A673 (cell line): ENCODE measurements at regions of chr10 and their contacts with region 1.

Region 1: DNA sequence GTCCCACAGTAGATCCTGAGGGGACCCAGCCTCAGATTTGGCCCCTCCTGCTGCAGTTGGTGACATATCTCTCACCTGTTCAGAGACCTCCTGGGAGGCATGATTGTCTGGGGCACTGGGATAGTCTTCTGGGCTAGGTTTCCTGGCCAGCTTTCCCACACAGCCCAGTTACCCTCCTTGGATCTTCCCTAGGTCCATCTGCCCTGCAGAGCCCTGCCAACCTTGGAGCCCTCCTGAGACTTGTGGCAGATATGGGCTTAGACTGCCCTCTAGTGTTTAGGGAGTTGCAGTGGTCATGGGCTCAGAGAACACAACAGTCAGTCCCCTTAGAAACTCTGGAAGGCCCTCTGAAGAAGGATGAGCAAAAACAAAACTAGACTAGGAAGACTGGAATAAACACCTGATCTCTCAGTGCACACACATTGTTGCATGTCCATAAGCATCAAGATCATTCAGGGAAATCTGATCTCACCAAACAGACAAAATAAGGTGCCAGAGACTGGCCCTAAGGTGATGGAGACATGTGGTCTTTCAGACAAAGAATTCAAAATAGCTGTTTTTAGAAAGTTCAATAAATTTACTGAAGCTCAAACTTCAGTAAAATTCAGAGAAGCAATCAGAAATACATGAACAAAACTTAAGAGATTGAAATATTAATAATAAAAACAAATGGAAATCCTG is 324.6 kb downstream of the ATRNL1 start:
- DNase-seq: peak; percentile 74
- H3K4me3 ChIP-seq: no peak overlapping the region
- H3K27ac ChIP-seq: no peak overlapping the region
- H3K4me1 ChIP-seq: no peaks in the 10 kb centered on the region
- H3K27me3 ChIP-seq: no peaks in the 10 kb centered on the region
- CTCF ChIP-seq: peak; percentile 73

Region 2: DNA sequence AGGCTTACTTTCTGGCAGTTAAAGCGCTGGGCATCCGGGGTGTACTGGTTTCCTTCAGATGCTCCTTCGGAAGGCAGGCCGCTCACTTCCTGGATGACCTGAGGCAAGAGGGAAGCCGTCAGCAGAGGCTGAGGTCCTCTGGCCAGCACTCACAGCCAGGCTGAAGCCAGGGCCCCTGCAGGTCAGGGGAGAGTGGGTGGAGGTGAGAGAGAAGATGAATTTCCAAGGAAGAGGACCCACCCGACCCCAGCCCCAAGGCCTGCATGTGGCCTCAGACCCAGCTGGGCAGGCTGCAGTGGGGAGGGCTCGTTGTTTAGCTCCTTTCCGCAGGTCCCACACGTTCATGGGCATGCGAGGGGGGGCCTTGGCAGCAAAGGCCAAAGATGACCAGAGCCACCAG is 1107.4 kb before region 1 on chr10:
- CTCF ChIA-PET with region 1: no interaction called
- POLR2A ChIA-PET with region 1: no interaction called
- intact Hi-C with region 1: loop called (anchors 5 kb)
- DNase-seq: no peak
- H3K4me3 ChIP-seq: no peak overlapping the region
- H3K27ac ChIP-seq: no peak overlapping the region
- H3K4me1 ChIP-seq: no peaks in the 10 kb centered on the region
- H3K27me3 ChIP-seq: no peaks in the 10 kb centered on the region
- CTCF ChIP-seq: no peak

Region 3: GRCh38 chr10:114876602-114877300 is 541.0 kb before region 1 on chr10:
- CTCF ChIA-PET with region 1: no interaction called
- POLR2A ChIA-PET with region 1: no interaction called
- intact Hi-C with region 1: loop called (anchors 10 kb)
- DNase-seq: peak; percentile 80
- H3K4me3 ChIP-seq: no peak overlapping the region
- H3K27ac ChIP-seq: no peak overlapping the region
- H3K4me1 ChIP-seq: peaks cover 29% of the 10 kb centered on the region
- H3K27me3 ChIP-seq: no peaks in the 10 kb centered on the region
- CTCF ChIP-seq: peak; percentile 86

Region 4: GRCh38 chr10:115141254-115141653 is 276.5 kb before region 1 on chr10:
- CTCF ChIA-PET with region 1: no interaction called
- POLR2A ChIA-PET with region 1: no interaction called
- intact Hi-C with region 1: loop called (anchors 1 kb)
- DNase-seq: peak; percentile 33
- H3K4me3 ChIP-seq: no peak overlapping the region
- H3K27ac ChIP-seq: no peak overlapping the region
- H3K4me1 ChIP-seq: no peaks in the 10 kb centered on the region
- H3K27me3 ChIP-seq: peaks cover 19% of the 10 kb centered on the region
- CTCF ChIP-seq: peak; percentile 60

Region 5: DNA sequence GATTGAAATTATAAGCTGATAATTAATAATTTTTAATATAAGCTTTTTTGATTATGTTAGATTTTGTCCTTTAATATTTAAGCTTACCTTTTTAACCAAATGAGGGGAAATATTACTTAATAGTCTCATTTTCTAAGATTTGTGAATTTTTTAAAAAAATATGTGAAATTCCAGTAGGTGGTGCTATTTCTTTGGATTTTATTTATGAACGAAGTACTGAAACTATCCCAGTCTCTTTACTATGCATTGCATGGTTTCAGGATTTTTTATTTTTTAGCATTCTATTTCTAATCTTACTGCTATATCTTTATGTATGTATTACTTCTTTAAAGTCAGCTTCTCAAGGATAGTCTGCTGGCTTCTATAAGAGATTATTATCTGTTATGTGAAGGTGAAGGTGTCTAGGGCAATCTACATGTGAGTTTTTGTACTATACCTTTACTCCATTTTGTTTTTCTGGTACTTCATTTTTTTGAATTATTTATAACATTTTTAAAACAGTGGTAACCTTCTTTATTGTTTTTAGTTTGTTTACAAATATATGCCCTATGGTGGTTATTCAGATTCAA is 246.2 kb before region 1 on chr10:
- CTCF ChIA-PET with region 1: no interaction called
- POLR2A ChIA-PET with region 1: no interaction called
- intact Hi-C with region 1: loop called (anchors 5 kb)
- DNase-seq: peak; percentile 30
- H3K4me3 ChIP-seq: no peak overlapping the region
- H3K27ac ChIP-seq: no peak overlapping the region
- H3K4me1 ChIP-seq: no peaks in the 10 kb centered on the region
- H3K27me3 ChIP-seq: no peaks in the 10 kb centered on the region
- CTCF ChIP-seq: peak; percentile 56; the same call in 1 of the 2 replicates

Region 6: GRCh38 chr10:115355162-115355760 is 62.5 kb before region 1 on chr10:
- CTCF ChIA-PET with region 1: no interaction called
- POLR2A ChIA-PET with region 1: no interaction called
- intact Hi-C with region 1: loop called (anchors 2 kb)
- DNase-seq: peak; percentile 70
- H3K4me3 ChIP-seq: no peak overlapping the region
- H3K27ac ChIP-seq: no peak overlapping the region
- H3K4me1 ChIP-seq: no peaks in the 10 kb centered on the region
- H3K27me3 ChIP-seq: peaks cover 6% of the 10 kb centered on the region
- CTCF ChIP-seq: peak; percentile 74

Region 7: GRCh38 chr10:115491526-115492140 is 73.9 kb after region 1 on chr10:
- CTCF ChIA-PET with region 1: no interaction called
- POLR2A ChIA-PET with region 1: no interaction called
- intact Hi-C with region 1: no loop called
- DNase-seq: no peak
- H3K4me3 ChIP-seq: no peak overlapping the region
- H3K27ac ChIP-seq: no peak overlapping the region
- H3K4me1 ChIP-seq: no peaks in the 10 kb centered on the region
- H3K27me3 ChIP-seq: peaks cover 9% of the 10 kb centered on the region
- CTCF ChIP-seq: no peak